CD4-positive, alpha-beta T cell (primary cell): ENCODE measurements at regions of chr5 and their contacts with region 1.

Region 1: DNA sequence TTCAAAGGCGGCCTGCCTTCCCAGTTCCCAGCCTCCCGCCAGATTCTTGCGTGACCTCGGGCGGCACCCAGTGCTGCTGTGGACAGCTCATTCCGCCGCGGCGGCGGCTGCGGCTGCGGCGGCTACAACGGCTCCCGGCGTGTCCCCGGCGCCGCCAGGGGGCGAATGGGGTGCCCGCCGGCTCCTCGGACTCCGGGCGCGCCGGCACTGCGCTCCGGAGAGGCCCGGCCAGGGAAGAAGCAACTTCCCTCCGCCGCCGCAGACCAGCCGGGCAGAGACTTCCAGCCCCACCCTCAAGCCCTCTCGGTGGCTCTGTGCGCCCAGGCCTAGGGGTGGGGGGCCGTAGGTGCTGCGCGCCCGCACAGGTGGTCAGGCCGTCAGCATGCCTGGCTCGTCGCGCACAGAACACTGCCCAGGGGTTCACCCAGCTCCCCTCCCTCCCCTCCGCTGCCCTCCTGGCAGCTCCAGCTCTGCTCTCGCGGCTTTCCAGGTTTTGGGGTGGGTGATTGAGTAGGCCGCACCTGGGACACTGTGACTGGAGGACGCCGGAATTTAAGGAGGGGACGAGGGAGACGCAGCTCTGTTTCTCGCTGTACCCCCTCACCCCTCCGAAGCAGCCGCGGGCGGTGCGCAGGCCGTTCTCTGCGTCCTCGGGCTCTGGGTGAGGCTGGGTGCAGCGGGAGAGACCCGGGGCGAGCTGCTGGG is 20.2 kb downstream of the IGIP start:
- DNase-seq: peak in 13 of 14 experiments; percentile 11 to 81 (median 48)
- ATAC-seq: peak; percentile 71
- H3K4me3 ChIP-seq: peak overlapping the region; percentile 36
- H3K4me3 Mint-ChIP-seq: peak overlapping the region; percentile 21
- H3K27ac ChIP-seq: no peak overlapping the region
- H3K27ac Mint-ChIP-seq: no peak overlapping the region
- H3K4me1 ChIP-seq: peaks cover 29% of the 10 kb centered on the region
- H3K4me1 Mint-ChIP-seq: peaks cover 21% of the 10 kb centered on the region
- H3K27me3 ChIP-seq: peaks cover 12 to 18% of the 10 kb centered on the region in 2 experiments
- H3K27me3 Mint-ChIP-seq: peaks cover 27% of the 10 kb centered on the region
- CTCF ChIP-seq: peak; percentile 63

Region 2: DNA sequence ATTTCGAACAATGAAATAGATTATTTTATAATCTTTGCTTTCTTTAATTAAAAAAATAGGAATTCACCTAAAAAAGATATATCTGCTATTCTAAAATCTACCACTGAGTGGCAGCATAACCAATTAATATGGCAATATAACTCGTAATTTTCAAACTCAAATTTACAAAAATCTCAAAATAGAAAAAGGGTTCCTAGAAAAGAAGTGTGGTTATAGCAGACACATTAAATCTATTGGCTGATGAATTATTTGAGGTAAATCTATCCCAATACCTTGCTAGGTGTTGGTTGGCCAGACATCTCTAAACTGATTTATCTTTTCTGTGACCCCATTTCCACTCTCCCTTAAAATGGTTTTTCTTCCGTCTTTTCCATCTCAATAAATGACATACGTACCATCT is 72.7 kb before region 1 on chr5:
- CTCF ChIA-PET with region 1: interaction called, 38 read pairs
- POLR2A ChIA-PET with region 1: interaction called, 5 read pairs
- intact Hi-C with region 1: loop called (anchors 1 kb)
- DNase-seq: peak in 3 of 14 experiments; percentile 49 to 67 (median 64)
- ATAC-seq: no peak
- H3K4me3 ChIP-seq: no peak overlapping the region
- H3K4me3 Mint-ChIP-seq: no peak overlapping the region
- H3K27ac ChIP-seq: no peak overlapping the region
- H3K27ac Mint-ChIP-seq: no peak overlapping the region
- H3K4me1 ChIP-seq: no peaks in the 10 kb centered on the region
- H3K4me1 Mint-ChIP-seq: no peaks in the 10 kb centered on the region
- H3K27me3 ChIP-seq: peaks cover 7 to 10% of the 10 kb centered on the region in 2 experiments
- H3K27me3 Mint-ChIP-seq: peaks cover 36% of the 10 kb centered on the region
- CTCF ChIP-seq: peak; percentile 83

Region 3: GRCh38 chr5:140113699-140114263 is 32.2 kb before region 1 on chr5 and contains the start of gene PURA:
- CTCF ChIA-PET with region 1: interaction called, 52 read pairs
- POLR2A ChIA-PET with region 1: interaction called, 9 read pairs
- intact Hi-C with region 1: loop called (anchors 2 kb)
- DNase-seq: peak; percentile 95 to 98 (median 97)
- ATAC-seq: peak; percentile 93
- H3K4me3 ChIP-seq: peak within 1 kb of the TSS; percentile 84
- H3K4me3 Mint-ChIP-seq: peak within 1 kb of the TSS; percentile 100
- H3K27ac ChIP-seq: peak within 1 kb of the TSS; percentile 82 to 83
- H3K27ac Mint-ChIP-seq: peak within 1 kb of the TSS; percentile 96
- H3K4me1 ChIP-seq: peaks cover 40% of the 10 kb centered on the region
- H3K4me1 Mint-ChIP-seq: peaks cover 90% of the 10 kb centered on the region
- H3K27me3 ChIP-seq: peaks cover 8 to 10% of the 10 kb centered on the region in 2 experiments
- H3K27me3 Mint-ChIP-seq: peaks cover 6% of the 10 kb centered on the region
- CTCF ChIP-seq: no peak
- total RNA-seq, gene PURA: 7.0 to 7.9 TPM

Region 4: DNA sequence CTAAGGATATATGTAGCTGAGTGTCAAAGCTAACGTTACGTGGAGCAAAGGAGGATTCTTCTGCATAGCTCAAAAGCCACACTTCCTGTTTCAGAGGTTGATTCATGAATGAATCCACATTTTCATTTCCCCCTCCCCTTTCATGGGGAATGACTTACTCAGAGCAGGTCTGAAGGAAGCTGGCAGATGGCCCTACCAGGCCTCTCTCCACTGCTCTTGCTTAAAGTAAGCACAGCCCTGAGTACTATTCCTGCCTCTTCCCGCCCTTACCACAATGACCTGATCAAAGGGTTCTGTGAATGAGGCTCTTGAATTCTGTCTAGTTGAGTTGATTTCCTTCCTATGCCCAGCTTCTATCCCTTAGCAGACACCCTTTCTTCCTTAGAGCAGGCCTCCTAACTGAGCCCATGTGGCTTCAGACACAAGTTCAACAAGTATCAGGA is 14.0 kb before region 1 on chr5:
- CTCF ChIA-PET with region 1: interaction called, 8 read pairs
- POLR2A ChIA-PET with region 1: no interaction called
- intact Hi-C with region 1: loop called in 1 of 2 experiments (anchors 2 kb)
- DNase-seq: peak in 4 of 14 experiments; percentile 14 to 55 (median 34)
- ATAC-seq: peak; percentile 77
- H3K4me3 ChIP-seq: no peak overlapping the region
- H3K4me3 Mint-ChIP-seq: no peak overlapping the region
- H3K27ac ChIP-seq: no peak overlapping the region
- H3K27ac Mint-ChIP-seq: no peak overlapping the region
- H3K4me1 ChIP-seq: peaks cover 18% of the 10 kb centered on the region
- H3K4me1 Mint-ChIP-seq: peaks cover 49% of the 10 kb centered on the region
- H3K27me3 ChIP-seq: no peaks in the 10 kb centered on the region
- H3K27me3 Mint-ChIP-seq: no peaks in the 10 kb centered on the region
- CTCF ChIP-seq: no peak

Region 5: GRCh38 chr5:140157032-140157803 is 11.2 kb after region 1 on chr5:
- CTCF ChIA-PET with region 1: interaction called, 10 read pairs
- POLR2A ChIA-PET with region 1: no interaction called
- intact Hi-C with region 1: loop called (anchors 1 kb)
- DNase-seq: peak; percentile 79 to 93 (median 84)
- ATAC-seq: peak; percentile 100
- H3K4me3 ChIP-seq: no peak overlapping the region
- H3K4me3 Mint-ChIP-seq: peak overlapping the region; percentile 50
- H3K27ac ChIP-seq: no peak overlapping the region
- H3K27ac Mint-ChIP-seq: peak overlapping the region; percentile 21
- H3K4me1 ChIP-seq: peaks cover 10% of the 10 kb centered on the region
- H3K4me1 Mint-ChIP-seq: peaks cover 15% of the 10 kb centered on the region
- H3K27me3 ChIP-seq: no peaks in the 10 kb centered on the region
- H3K27me3 Mint-ChIP-seq: no peaks in the 10 kb centered on the region
- CTCF ChIP-seq: peak; percentile 86

Region 6: DNA sequence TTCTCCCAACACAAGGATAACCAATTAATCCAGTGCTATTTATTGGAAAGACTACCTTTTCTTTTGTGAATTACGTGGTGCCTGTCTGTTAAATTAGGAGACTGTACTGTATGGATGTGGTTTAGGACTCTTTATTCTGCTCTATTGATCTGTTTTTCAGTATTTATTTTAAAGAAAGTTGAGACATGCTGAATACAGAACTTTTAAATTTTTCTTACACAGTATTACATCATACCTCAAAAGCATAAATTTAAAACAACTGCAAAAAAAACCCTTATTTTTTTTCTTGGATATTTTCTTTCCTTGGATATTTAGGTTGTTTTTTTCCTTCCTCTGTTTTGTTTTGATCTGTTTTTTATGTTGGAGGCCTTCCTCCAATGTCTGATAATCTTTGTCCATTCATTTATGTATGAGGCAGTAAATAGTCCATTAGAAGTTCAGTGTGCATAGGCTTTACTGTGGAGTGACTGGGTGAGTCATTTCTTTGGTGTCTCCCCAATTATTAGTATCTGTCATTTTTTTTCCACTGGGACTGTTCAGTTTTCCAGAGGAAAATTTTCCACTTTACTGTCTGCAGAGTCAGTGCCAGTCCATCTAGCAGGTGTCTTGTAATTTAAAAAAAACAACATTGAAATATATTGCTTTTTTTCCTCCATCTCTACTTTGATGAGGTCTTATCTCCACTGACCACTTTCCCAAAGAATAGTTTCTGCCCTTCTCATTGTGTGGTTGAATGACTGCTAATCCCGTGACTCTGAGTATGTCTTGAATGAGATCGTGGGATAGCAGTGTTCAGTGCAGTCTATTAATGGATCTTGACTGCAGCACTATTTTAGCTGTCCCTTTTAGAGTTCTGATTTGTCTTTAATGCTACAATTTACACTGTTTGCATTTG is 44.3 kb after region 1 on chr5:
- CTCF ChIA-PET with region 1: no interaction called
- POLR2A ChIA-PET with region 1: no interaction called
- intact Hi-C with region 1: no loop called
- DNase-seq: no peak
- ATAC-seq: no peak
- H3K4me3 ChIP-seq: no peak overlapping the region
- H3K4me3 Mint-ChIP-seq: no peak overlapping the region
- H3K27ac ChIP-seq: no peak overlapping the region
- H3K27ac Mint-ChIP-seq: no peak overlapping the region
- H3K4me1 ChIP-seq: peaks cover 2% of the 10 kb centered on the region
- H3K4me1 Mint-ChIP-seq: no peaks in the 10 kb centered on the region
- H3K27me3 ChIP-seq: no peaks in the 10 kb centered on the region
- H3K27me3 Mint-ChIP-seq: no peaks in the 10 kb centered on the region
- CTCF ChIP-seq: no peak

Region 7: DNA sequence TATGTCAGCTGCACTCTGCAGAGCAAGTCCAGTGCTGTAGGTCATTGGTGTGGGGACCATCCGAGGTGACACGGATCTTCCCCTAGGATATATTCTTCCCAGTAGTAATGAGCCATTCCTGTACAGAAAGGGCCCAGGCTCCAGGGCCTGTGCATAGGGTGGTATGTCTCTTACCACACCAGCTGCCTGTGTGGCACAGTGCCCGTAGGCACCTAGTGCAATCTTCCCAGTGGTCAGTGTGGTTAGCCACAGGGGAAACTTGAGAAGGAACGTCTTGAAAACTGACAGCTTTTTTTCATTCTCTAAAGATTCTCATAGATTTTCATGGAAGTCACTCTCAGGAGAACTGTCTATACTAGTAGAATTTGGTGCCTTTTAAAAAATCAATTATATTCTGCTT is 68.9 kb after region 1 on chr5:
- CTCF ChIA-PET with region 1: no interaction called
- POLR2A ChIA-PET with region 1: no interaction called
- intact Hi-C with region 1: no loop called
- DNase-seq: no peak
- ATAC-seq: no peak
- H3K4me3 ChIP-seq: no peak overlapping the region
- H3K4me3 Mint-ChIP-seq: no peak overlapping the region
- H3K27ac ChIP-seq: no peak overlapping the region
- H3K27ac Mint-ChIP-seq: no peak overlapping the region
- H3K4me1 ChIP-seq: no peaks in the 10 kb centered on the region
- H3K4me1 Mint-ChIP-seq: no peaks in the 10 kb centered on the region
- H3K27me3 ChIP-seq: no peaks in the 10 kb centered on the region
- H3K27me3 Mint-ChIP-seq: no peaks in the 10 kb centered on the region
- CTCF ChIP-seq: no peak